Activated CD8-positive, alpha-beta T cell treated with anti-CD3 and anti-CD28 coated beads for 36 hours (primary cell): ENCODE measurements at regions of chr6 and their contacts with region 1.

Region 1: GRCh38 chr6:30600451-30600961 is 16.5 kb downstream of the PPP1R10 start:
- DNase-seq: no peak
- ATAC-seq: no peak
- H3K4me3 Mint-ChIP-seq: no peak overlapping the region
- H3K27ac Mint-ChIP-seq: peak overlapping the region; percentile 25
- H3K4me1 Mint-ChIP-seq: peaks cover 12% of the 10 kb centered on the region
- H3K27me3 Mint-ChIP-seq: no peaks in the 10 kb centered on the region
- CTCF ChIP-seq: no peak

Region 2: DNA sequence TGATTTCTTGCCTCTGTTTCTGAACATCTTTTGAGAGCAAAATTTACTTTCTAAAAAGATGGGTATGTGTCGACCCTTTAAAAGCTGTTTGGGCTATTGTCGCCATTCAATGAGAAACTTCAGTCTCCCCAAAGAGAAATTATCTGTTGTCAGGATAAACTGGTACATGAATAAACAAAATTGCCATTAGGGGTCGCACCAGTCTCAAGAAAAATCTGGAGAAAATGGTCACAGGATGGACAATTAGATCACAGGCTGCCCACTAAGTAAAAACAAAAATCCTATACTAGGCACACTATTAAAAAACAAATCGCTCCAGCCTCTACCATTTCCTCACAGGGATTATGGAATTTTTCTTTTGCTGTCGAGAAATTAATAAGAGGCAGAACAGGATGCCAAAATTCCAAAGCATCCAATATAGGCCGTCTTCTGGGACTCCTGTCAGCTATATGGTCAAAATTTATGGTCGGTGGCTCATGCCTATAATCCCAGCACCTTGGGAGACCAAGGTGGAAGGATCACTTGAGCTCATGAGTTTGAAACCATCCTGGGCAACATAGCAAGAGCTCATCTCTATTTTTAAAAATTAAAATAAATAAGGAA is 116.7 kb before region 1 on chr6:
- CTCF ChIA-PET with region 1: interaction called, 115 read pairs
- POLR2A ChIA-PET with region 1: interaction called, 5 read pairs
- intact Hi-C with region 1: loop called (anchors 5 kb)
- DNase-seq: peak; percentile 51
- ATAC-seq: no peak
- H3K4me3 Mint-ChIP-seq: no peak overlapping the region
- H3K27ac Mint-ChIP-seq: no peak overlapping the region
- H3K4me1 Mint-ChIP-seq: peaks cover 42% of the 10 kb centered on the region
- H3K27me3 Mint-ChIP-seq: peaks cover 37% of the 10 kb centered on the region
- CTCF ChIP-seq: peak; percentile 84

Region 3: DNA sequence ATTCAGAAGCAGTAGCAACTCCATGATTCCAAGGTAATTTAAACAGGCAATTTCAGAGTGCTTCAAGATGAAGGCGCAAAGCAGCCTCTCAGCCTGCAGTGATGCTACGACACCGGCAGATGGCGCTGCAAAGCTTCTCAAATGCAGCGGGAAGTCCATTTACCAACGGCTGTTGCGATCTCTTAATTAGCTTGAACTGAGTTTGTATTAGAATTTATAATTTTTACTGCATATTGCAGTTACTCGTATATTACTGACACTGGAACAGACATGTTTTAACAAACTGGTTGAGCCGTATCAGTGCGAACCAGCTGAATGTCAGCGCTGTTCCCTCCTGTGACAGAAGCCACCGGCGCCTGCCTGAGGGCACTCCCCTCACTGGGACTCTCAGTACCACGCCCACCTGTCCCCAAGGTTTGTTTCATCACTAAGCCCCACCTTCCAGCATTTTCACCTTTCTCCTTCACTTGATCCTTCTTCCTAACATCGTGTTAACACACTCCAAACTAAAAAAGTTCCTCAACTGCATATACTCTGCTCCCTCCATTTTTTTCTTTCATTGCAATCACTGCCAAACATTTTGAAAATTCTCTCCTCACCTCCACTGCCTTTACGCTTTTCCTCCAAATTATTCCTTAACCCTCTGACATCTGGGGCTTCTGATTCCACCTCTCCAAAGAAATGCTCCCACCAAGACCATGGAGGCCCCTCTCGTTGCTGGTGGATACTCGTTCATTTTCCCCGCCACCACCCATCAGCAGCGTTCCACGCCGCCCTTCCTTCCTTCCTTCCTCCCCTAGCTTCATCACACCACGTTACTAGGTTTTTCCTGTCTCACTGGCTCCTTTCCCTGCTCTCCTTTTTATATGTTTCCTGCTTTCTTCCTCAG is 58.7 kb before region 1 on chr6:
- CTCF ChIA-PET with region 1: interaction called, 91 read pairs
- POLR2A ChIA-PET with region 1: interaction called, 4 read pairs
- intact Hi-C with region 1: loop called (anchors 2 kb)
- DNase-seq: peak; percentile 85
- ATAC-seq: peak; percentile 75
- H3K4me3 Mint-ChIP-seq: peak overlapping the region; percentile 71
- H3K27ac Mint-ChIP-seq: peak overlapping the region; percentile 77
- H3K4me1 Mint-ChIP-seq: peaks cover 36% of the 10 kb centered on the region
- H3K27me3 Mint-ChIP-seq: no peaks in the 10 kb centered on the region
- CTCF ChIP-seq: peak; percentile 98

Region 4: DNA sequence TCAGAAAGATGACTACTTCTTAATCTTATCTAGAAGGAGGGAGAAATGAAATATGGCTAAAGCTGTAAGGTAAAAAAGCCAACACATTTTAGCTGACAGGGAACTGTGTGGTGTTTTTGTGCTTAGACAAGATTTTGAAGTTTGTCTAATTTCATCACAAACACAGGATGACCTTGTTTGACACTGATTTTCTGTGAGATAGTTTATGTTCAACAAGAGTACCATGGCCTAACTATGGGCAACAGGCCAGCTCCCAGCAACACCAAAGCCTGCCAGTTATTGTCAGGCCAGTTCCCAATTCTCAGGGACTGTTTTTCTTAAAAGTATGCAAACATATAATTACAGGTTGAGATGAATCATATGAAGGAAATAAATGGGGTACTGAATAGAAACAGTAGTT is 34.7 kb before region 1 on chr6:
- CTCF ChIA-PET with region 1: interaction called, 19 read pairs
- POLR2A ChIA-PET with region 1: interaction called, 6 read pairs
- intact Hi-C with region 1: no loop called
- DNase-seq: no peak
- ATAC-seq: no peak
- H3K4me3 Mint-ChIP-seq: no peak overlapping the region
- H3K27ac Mint-ChIP-seq: no peak overlapping the region
- H3K4me1 Mint-ChIP-seq: peaks cover 38% of the 10 kb centered on the region
- H3K27me3 Mint-ChIP-seq: no peaks in the 10 kb centered on the region
- CTCF ChIP-seq: no peak

Region 5: GRCh38 chr6:30578051-30578450 is 22.5 kb before region 1 on chr6:
- CTCF ChIA-PET with region 1: interaction called, 22 read pairs
- POLR2A ChIA-PET with region 1: interaction called, 75 read pairs
- intact Hi-C with region 1: no loop called
- DNase-seq: no peak
- ATAC-seq: no peak
- H3K4me3 Mint-ChIP-seq: no peak overlapping the region
- H3K27ac Mint-ChIP-seq: peak overlapping the region; percentile 9
- H3K4me1 Mint-ChIP-seq: peaks cover 44% of the 10 kb centered on the region
- H3K27me3 Mint-ChIP-seq: no peaks in the 10 kb centered on the region
- CTCF ChIP-seq: no peak

Region 6: GRCh38 chr6:30611150-30611855 is 10.8 kb after region 1 on chr6:
- CTCF ChIA-PET with region 1: interaction called, 48 read pairs
- POLR2A ChIA-PET with region 1: interaction called, 121 read pairs
- intact Hi-C with region 1: no loop called
- DNase-seq: no peak
- ATAC-seq: no peak
- H3K4me3 Mint-ChIP-seq: no peak overlapping the region
- H3K27ac Mint-ChIP-seq: peak overlapping the region; percentile 98
- H3K4me1 Mint-ChIP-seq: peaks cover 60% of the 10 kb centered on the region
- H3K27me3 Mint-ChIP-seq: no peaks in the 10 kb centered on the region
- CTCF ChIP-seq: no peak